AG04449 (cell line): ENCODE measurements at regions of chr11 and their contacts with region 1.

Region 1: DNA sequence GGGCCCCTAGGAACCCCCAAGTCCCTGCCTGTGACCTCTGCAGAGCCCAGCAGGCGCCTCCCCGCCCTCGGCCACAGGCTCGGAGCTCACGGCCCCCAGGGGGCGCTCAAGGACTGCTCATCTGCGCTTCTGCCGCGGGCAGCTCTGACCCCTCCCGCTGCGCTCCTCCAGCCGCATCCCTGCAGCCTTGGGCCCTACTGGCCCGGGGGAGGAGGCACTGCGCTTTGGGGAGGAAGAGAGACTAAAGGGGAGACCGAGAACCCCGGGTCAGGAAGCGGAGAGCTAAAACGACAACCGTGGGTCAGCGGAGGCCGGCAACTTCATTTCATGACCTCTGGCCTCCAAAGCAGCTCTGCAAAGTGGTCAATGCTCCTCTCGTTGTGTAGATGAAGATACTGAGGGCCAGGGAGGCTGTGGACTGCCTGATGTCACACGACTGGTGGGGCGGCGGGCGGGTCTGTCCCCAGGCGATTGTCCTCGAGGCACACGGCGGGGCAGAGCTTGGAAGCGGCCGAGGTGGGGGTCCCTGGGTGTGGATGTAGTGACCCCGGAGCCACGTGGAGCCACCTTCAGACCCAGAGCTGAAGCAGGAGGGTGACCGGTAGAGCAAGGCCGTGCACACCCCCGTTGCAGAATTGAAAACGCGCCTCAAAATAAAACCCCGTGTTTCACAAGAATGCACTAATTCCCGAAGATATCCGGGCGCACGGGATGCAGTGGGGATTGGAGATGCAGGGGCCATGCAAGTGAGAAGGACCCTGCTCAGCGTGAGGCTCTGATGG is 2.7 kb upstream of the KRTAP5-6 start:
- DNase-seq: peak; percentile 3
- H3K4me3 ChIP-seq: no peak overlapping the region
- CTCF ChIP-seq: peak; percentile 97

Region 2: GRCh38 chr11:1652771-1653540 is 41.3 kb before region 1 on chr11:
- CTCF ChIA-PET with region 1: interaction called, 112 read pairs
- POLR2A ChIA-PET with region 1: no interaction called
- DNase-seq: no peak
- H3K4me3 ChIP-seq: no peak overlapping the region
- CTCF ChIP-seq: peak; percentile 93

Region 3: GRCh38 chr11:1728931-1729691 is 34.9 kb after region 1 on chr11:
- CTCF ChIA-PET with region 1: interaction called, 16 read pairs
- POLR2A ChIA-PET with region 1: no interaction called
- DNase-seq: no peak
- H3K4me3 ChIP-seq: no peak overlapping the region
- CTCF ChIP-seq: no peak

Region 4: GRCh38 chr11:1817511-1817910 is 123.3 kb after region 1 on chr11:
- CTCF ChIA-PET with region 1: interaction called, 47 read pairs
- POLR2A ChIA-PET with region 1: no interaction called
- DNase-seq: no peak
- H3K4me3 ChIP-seq: no peak overlapping the region
- CTCF ChIP-seq: no peak

Region 5: GRCh38 chr11:1845561-1846452 is 151.6 kb after region 1 on chr11:
- CTCF ChIA-PET with region 1: interaction called, 33 read pairs
- POLR2A ChIA-PET with region 1: no interaction called
- DNase-seq: no peak
- H3K4me3 ChIP-seq: no peak overlapping the region
- CTCF ChIP-seq: no peak

Region 6: DNA sequence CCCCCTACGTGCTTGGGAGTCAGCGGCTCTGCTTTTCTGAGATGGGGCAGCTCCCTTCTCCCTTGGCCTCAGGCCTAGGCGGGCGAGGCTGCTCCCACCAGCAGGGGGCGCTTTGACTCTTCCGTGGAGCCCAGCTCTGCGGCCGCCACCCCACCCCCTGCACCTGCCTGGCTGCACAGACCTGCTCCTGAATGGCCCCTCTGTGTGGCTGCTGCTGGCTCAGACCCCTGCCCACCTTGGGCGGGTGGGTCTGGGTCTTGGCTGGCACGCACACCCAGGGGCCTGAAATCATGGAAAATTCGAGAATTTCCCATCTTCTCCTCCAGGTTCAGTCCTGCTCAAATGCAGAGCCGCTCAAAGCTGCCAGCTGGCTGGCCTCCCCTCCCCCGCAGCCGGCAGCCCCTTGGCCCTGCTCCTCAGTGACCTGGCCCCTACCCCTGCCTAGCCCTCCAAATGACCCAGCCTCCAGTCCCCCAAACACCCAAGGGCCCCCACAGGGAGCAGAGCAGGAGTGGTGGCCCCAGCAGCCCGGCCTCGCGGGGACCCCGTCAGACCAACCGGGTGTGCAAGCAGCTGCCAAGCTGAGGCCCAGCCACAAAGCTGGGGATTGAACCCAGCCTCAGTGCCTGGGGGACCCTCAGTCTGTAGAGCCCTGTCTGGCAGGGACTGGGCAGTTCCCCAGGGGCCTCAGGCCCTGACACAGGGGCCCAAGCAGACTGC is 188.4 kb after region 1 on chr11:
- CTCF ChIA-PET with region 1: interaction called, 36 read pairs
- POLR2A ChIA-PET with region 1: no interaction called
- DNase-seq: no peak
- H3K4me3 ChIP-seq: no peak overlapping the region
- CTCF ChIP-seq: peak; percentile 95

Region 7: GRCh38 chr11:2002807-2003206 is 308.6 kb after region 1 on chr11:
- CTCF ChIA-PET with region 1: interaction called, 136 read pairs
- POLR2A ChIA-PET with region 1: no interaction called
- DNase-seq: no peak
- H3K4me3 ChIP-seq: no peak overlapping the region
- CTCF ChIP-seq: no peak